BJ (cell line): ENCODE measurements at regions of chr11 and their contacts with region 1.

Region 1: GRCh38 chr11:83193315-83194280 is at the start of gene ANKRD42:
- DNase-seq: peak; percentile 63
- H3K4me3 ChIP-seq: peak within 1 kb of the TSS; percentile 77
- H3K27me3 ChIP-seq: no peaks in the 10 kb centered on the region
- CTCF ChIP-seq: no peak
- polyA plus RNA-seq, gene ANKRD42: 5.1 and 9.1 TPM in 2 replicates

Region 2: DNA sequence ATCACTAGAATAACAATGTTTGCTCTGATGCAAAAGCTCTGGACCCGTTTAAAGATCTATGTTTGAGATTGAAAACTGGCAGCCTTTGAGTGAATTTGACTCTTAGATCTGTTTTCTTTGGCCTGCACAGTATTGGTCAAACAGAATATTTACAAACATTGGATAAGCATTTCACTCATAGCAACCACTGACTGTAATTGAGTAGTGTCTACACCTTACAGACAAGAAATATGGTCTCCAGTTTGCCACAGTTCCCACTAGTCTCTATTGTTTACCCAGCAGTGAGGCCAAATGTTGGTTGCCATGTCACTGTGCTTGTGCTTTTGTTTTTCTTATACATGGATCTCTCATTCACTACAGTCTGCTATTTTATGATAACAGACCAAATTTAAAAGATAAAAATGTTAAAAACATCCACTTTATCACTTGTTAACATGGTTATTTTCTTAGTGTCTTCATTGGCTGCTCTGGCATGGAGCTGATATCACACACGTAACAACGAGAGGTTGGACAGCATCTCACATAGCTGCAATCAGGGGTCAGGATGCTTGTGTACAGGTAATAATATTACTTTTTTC is 12.1 kb after region 1 on chr11:
- CTCF ChIA-PET with region 1: interaction called, 11 read pairs
- POLR2A ChIA-PET with region 1: no interaction called
- DNase-seq: no peak
- H3K4me3 ChIP-seq: no peak overlapping the region
- H3K27me3 ChIP-seq: no peaks in the 10 kb centered on the region
- CTCF ChIP-seq: no peak